ENCODE measurements at regions of chr12 and their contacts with region 1.

Region 1: GRCh38 chr12:118307069-118307954 is 65.4 kb downstream of the TAOK3 start:
- DNase-seq: peak; percentile 92
- ATAC-seq: peak; percentile 93
- H3K4me3 ChIP-seq: peak overlapping the region; percentile 46
- H3K27ac ChIP-seq: peak overlapping the region; percentile 65
- H3K4me1 ChIP-seq: peaks cover 46% of the 10 kb centered on the region
- H3K27me3 ChIP-seq: no peaks in the 10 kb centered on the region
- CTCF ChIP-seq: no peak

Region 2: GRCh38 chr12:117919479-117919878 is 387.8 kb before region 1 on chr12:
- CTCF ChIA-PET with region 1: no interaction called
- POLR2A ChIA-PET with region 1: no interaction called
- intact Hi-C with region 1: no loop called
- DNase-seq: no peak
- ATAC-seq: no peak
- H3K4me3 ChIP-seq: no peak overlapping the region
- H3K27ac ChIP-seq: no peak overlapping the region
- H3K4me1 ChIP-seq: no peaks in the 10 kb centered on the region
- H3K27me3 ChIP-seq: no peaks in the 10 kb centered on the region
- CTCF ChIP-seq: no peak

Region 3: DNA sequence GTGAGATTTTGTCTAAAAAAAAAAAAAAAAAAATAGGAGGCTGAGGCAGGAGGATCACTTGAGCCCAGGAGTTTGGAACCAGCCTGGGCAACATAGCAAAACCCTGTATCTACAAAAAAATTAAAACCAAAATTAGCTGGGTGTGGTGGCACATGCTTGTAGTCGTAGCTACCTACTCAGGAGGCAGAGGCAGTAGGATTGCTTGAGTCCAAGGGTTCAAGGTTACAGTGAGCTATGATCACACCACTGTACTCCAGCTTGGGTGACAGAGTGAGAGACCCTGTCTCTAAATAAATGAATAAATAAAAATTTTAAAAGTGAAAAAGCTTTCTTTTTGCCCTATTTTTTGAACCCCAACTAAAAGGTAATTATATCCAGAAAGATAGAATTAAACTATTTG is 57.8 kb before region 1 on chr12:
- CTCF ChIA-PET with region 1: no interaction called
- POLR2A ChIA-PET with region 1: no interaction called
- intact Hi-C with region 1: no loop called
- DNase-seq: no peak
- ATAC-seq: no peak
- H3K4me3 ChIP-seq: no peak overlapping the region
- H3K27ac ChIP-seq: no peak overlapping the region
- H3K4me1 ChIP-seq: no peaks in the 10 kb centered on the region
- H3K27me3 ChIP-seq: no peaks in the 10 kb centered on the region
- CTCF ChIP-seq: no peak

Region 4: GRCh38 chr12:118337194-118337838 is 30.0 kb after region 1 on chr12:
- CTCF ChIA-PET with region 1: no interaction called
- POLR2A ChIA-PET with region 1: no interaction called
- intact Hi-C with region 1: loop called (anchors 2 kb)
- DNase-seq: peak; percentile 67
- ATAC-seq: peak; percentile 37
- H3K4me3 ChIP-seq: no peak overlapping the region
- H3K27ac ChIP-seq: peak overlapping the region; percentile 29
- H3K4me1 ChIP-seq: peaks cover 34% of the 10 kb centered on the region
- H3K27me3 ChIP-seq: no peaks in the 10 kb centered on the region
- CTCF ChIP-seq: no peak

Measured in PC-3 (cell line).